Spleen (tissue), 13 donors: ENCODE measurements at regions of chr2 and their contacts with region 1.

Region 1: GRCh38 chr2:66434679-66435548 is at the start of gene MEIS1:
- DNase-seq: peak; percentile 90
- H3K4me3 ChIP-seq: peak within 1 kb of the TSS; percentile 55 to 82 (median 66)
- H3K27ac ChIP-seq: peak within 1 kb of the TSS; percentile 63 to 90 (median 82)
- H3K4me1 ChIP-seq: peaks cover 0 to 84% (median 43%) of the 10 kb centered on the region in 6 donors
- H3K27me3 ChIP-seq: peaks cover 0 to 100% (median 45%) of the 10 kb centered on the region in 7 donors
- CTCF ChIP-seq: no peak
- POLR2A ChIP-seq: peak in 1 of 3 donors; percentile 87
- total RNA-seq, gene MEIS1: 23.6 to 81.4 (median 44.1) TPM

Region 2: DNA sequence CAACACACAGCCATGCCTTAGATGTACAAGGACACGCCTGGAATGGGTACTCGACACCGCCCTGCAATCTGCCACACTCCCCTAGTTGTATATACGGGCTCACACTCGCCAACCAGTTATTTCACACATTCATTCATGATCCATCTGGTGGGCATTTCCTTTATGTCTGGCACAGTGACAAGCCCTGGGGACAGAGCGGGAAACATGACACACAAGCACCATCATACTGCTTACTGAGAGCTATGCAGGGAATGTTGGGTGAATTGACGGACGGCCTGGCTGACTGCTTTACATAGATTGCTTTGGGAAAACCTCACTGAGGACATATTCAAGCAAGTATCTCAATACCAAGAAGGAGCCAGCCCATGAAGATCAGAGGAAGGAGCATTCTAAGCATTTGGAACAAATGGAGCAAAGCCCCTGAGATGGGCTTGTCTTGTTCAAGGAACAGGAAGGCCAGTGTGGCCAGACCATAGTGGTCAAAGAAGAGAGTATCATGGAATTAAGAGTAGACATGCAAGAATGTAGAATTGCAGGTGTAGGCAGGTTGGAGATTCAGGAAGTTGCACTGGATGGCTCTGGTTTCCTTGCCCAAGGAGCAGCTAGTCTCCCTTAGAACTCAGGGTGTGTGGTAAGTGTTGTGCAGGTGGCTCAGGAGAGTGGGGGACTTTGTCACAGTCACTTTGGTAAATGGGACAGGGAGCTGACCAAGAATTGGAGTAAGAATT is 554.3 kb before region 1 on chr2:
- intact Hi-C with region 1: no loop called
- DNase-seq: no peak
- H3K4me3 ChIP-seq: no peak overlapping the region
- H3K27ac ChIP-seq: no peak overlapping the region
- H3K4me1 ChIP-seq: no peaks in the 10 kb centered on the region
- H3K27me3 ChIP-seq: no peaks in the 10 kb centered on the region
- CTCF ChIP-seq: no peak
- POLR2A ChIP-seq: no peak

Region 3: GRCh38 chr2:66240286-66240685 is 194.6 kb before region 1 on chr2:
- intact Hi-C with region 1: no loop called
- DNase-seq: no peak
- H3K4me3 ChIP-seq: no peak overlapping the region
- H3K27ac ChIP-seq: peak overlapping the region in 5 of 8 donors; percentile 33 to 60 (median 46)
- H3K4me1 ChIP-seq: no peaks in the 10 kb centered on the region
- H3K27me3 ChIP-seq: no peaks in the 10 kb centered on the region
- CTCF ChIP-seq: no peak
- POLR2A ChIP-seq: no peak

Region 4: DNA sequence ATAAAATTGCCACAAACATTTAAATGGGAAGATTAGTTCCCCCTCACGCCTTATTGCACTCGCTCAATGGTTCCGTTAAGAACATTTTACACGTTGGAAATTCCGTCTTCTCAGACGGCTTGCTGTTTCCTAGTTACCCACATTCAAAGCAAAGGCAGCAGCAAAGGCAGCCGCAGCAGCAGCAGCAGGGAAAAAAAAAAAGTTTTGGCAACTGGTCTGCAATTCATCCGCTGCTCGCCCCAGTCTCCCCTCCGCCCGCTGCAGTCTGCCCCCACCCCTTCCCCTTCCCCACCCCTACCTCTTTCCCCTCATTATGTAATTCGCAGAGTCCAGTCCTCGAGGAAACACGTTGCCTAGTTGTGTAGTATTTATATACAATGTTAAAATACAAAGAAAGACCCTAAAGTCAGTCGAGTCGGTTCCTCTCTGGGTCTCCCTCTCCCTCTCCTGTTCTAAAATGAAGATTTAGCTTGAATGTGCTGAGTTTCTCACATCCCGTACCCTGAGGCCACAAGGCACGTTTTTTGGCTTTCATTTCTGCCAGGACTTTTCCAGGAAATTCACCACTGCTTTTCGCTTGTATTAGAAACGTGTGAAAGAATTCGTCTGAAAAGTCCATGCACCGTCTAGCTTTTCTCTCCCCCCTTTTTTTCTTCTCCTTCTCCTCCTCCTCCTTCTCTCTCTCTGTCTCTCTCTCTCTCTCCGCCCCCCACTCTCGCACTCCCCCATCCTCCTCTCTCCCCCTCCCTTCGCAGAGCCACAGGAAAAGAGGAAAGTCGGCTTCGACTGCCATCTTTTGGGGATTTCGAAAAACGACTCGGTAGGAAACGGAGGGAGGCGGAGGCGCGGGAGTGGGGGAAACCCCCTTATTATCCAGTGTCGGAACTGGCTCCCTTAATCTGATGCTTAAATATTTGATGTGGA is 140.0 kb after region 1 on chr2:
- intact Hi-C with region 1: loop called (anchors 5 kb)
- DNase-seq: no peak
- H3K4me3 ChIP-seq: peak overlapping the region in 7 of 8 donors; percentile 30 to 61 (median 35)
- H3K27ac ChIP-seq: peak overlapping the region in 7 of 8 donors; percentile 45 to 86 (median 78)
- H3K4me1 ChIP-seq: peaks cover 6 to 54% (median 39%) of the 10 kb centered on the region in 6 donors
- H3K27me3 ChIP-seq: peaks cover 0 to 77% (median 55%) of the 10 kb centered on the region in 7 donors
- CTCF ChIP-seq: peak in 5 of 11 experiments; percentile 18 to 53 (median 37)
- POLR2A ChIP-seq: no peak